Posterior vena cava (tissue), 2 donors: ENCODE measurements at regions of chr15 and their contacts with region 1.

Region 1: GRCh38 chr15:83837945-83838571 is 184.1 kb downstream of the ADAMTSL3 start:
- DNase-seq: no peak

Region 2: GRCh38 chr15:83858820-83859505 is 20.9 kb after region 1 on chr15:
- intact Hi-C with region 1: loop called in 1 of 2 experiments (anchors 2 kb)
- DNase-seq: no peak

Region 3: GRCh38 chr15:83999396-84000135 is 161.5 kb after region 1 on chr15:
- intact Hi-C with region 1: no loop called
- DNase-seq: no peak